HAP-1 (cell line): ENCODE measurements at regions of chr17 and their contacts with region 1.

Region 1: GRCh38 chr17:50026901-50027630 is 28.8 kb upstream of the ITGA3 start:
- DNase-seq: peak; percentile 35 to 87
- H3K4me3 ChIP-seq: no peak overlapping the region
- H3K4me1 ChIP-seq: no peaks in the 10 kb centered on the region
- H3K27me3 ChIP-seq: no peaks in the 10 kb centered on the region; the same call in none of the 2 replicates

Region 2: DNA sequence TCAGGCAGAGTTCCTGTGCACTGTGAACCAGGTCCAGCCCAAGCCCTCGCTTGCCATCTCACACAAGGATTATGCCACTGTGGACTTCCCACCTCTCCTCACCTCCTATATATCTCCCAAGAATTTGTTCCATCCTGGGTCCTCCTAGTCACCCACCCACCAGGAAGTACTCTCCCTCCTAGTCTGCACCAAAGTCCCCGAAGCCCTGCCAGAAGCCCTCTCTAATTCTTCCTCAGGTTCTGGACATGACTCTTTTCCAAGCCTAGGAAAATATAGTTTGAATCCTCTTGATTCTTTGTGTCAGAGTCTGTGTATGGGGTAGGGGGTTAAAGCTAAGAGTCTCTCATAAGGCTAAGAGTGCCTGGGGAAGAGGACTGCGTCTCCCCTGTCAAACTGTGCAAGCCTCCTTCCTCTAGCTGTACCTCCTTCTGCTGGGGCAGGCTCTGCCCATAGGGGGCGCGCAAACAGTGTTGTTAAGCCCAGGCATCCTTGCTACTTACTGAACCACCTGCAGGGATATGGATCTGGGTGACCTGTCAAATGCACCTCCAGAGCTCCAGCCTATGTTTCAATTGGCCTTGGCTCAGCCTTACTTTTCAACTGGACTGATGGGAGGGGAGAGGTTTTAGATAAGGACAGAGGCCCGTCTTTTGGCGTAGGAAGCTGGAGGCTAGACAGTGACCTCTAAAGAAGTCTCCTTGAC is 74.7 kb before region 1 on chr17:
- in situ Hi-C with region 1: no loop called
- DNase-seq: peak; percentile 68 to 93
- H3K4me3 ChIP-seq: no peak overlapping the region
- H3K4me1 ChIP-seq: no peaks in the 10 kb centered on the region
- H3K27me3 ChIP-seq: no peaks in the 10 kb centered on the region

Region 3: DNA sequence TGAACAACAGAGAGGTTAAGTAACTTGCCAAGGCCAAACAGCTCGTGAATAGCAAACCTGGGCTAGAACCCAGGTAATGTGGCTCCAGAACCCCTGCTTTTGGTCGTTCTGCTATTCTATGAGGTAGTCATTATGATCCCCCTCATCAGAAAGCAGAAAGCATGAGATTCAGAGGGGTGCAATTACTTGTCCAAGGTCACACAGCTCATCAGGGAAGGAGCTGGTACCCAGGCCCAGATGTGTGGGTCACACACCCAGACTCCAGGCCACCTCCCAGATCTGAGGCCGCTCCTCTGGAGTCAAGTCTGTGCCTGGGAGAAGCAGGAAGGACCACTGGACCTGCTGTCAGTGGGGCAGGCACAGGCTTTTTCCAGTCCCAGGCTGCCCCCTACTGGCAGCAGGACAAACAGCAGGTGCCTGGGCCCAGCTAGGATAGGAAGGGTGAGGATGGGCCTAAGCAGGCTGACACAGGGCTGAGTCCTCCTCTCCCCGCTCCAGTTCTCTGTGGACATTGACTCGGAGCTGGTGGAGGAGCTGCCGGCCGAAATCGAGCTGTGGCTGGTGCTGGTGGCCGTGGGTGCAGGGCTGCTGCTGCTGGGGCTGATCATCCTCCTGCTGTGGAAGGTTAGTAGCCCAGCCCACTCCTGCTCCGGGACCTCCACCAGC is 60.3 kb after region 1 on chr17:
- in situ Hi-C with region 1: loop called (anchors 5 kb)
- DNase-seq: peak; percentile 50 to 81
- H3K4me3 ChIP-seq: no peak overlapping the region
- H3K4me1 ChIP-seq: no peaks in the 10 kb centered on the region
- H3K27me3 ChIP-seq: no peaks in the 10 kb centered on the region